ENCODE measurements at regions of chr16 and their contacts with region 1.

Region 1: DNA sequence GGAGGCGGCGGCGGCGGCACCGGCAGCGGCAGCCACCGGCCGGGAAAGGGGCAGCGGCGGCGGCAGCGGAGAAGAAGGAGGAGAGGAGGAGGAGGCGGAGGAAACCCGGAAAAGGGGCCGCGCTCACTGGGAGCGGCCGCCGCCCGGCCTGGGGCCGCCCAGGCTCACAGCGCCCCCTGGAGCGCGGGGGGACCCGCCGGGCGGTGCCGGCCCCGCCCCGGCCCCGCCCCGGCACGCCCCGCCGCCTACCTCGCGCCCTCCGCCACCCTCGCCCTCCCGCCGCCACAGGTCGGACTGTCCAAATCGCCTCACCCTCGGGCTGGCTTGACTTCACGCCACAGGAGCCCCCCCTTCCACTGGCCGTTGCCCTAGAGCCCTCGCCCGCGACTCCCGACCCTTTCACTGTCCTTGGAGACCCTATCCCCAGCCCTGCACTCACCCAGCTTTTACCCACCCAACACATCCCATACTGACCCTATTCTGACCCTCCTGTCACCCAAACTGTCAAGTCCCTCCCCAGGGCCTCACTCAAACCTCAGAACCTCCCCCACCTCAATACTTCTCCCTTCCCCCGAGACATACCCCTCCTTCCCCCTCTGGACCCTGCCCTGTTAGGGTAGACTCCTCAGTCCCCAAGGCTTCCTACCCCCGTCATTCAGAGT is at the start of gene CSNK2A2:
- DNase-seq: peak; percentile 42 to 87 (median 69)
- ATAC-seq: peak; percentile 94
- H3K4me3 ChIP-seq: peak within 1 kb of the TSS; percentile 56 to 67
- H3K4me3 Mint-ChIP-seq: peak within 1 kb of the TSS; percentile 89
- H3K27ac ChIP-seq: no peak within 1 kb of the TSS
- H3K27ac Mint-ChIP-seq: peak within 1 kb of the TSS; percentile 88
- H3K4me1 ChIP-seq: peaks cover 26% of the 10 kb centered on the region
- H3K4me1 Mint-ChIP-seq: peaks cover 39% of the 10 kb centered on the region
- H3K27me3 ChIP-seq: no peaks in the 10 kb centered on the region
- H3K27me3 Mint-ChIP-seq: peaks cover 7% of the 10 kb centered on the region
- CTCF ChIP-seq: no peak
- total RNA-seq, gene CSNK2A2: 53.3 to 58.4 TPM

Region 2: DNA sequence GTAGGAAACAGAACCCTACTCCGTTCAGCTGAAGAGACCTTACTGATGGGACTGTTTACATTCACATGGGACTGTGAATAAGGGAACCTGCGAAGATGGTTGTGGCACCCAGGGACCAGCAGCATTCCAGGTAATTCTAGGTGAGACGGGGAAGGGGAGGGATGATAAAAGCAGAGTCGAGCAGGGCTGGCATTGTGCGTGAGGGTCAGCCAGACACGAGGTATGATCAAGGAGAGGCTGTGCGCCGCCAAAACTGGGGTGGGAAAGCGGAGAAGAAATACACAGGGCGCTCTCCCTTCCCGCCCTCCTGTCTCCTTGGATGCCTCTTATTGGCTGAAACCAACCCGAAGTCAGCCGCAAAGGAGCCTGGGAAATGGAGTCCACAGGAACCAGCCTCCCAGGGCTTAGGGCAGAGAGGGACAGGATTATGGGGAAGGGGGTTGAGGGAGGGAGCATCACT is 38.1 kb after region 1 on chr16:
- CTCF ChIA-PET with region 1: no interaction called
- POLR2A ChIA-PET with region 1: no interaction called
- intact Hi-C with region 1: loop called in 1 of 2 experiments (anchors 5 kb)
- DNase-seq: peak; percentile 10 to 76 (median 64)
- ATAC-seq: peak; percentile 94
- H3K4me3 ChIP-seq: peak overlapping the region; percentile 47 to 56
- H3K4me3 Mint-ChIP-seq: peak overlapping the region; percentile 80
- H3K27ac ChIP-seq: no peak overlapping the region
- H3K27ac Mint-ChIP-seq: no peak overlapping the region
- H3K4me1 ChIP-seq: no peaks in the 10 kb centered on the region
- H3K4me1 Mint-ChIP-seq: peaks cover 9% of the 10 kb centered on the region
- H3K27me3 ChIP-seq: peaks cover 0 to 5% of the 10 kb centered on the region in 2 experiments
- H3K27me3 Mint-ChIP-seq: peaks cover 14% of the 10 kb centered on the region
- CTCF ChIP-seq: no peak

Region 3: GRCh38 chr16:58249780-58250478 is 51.8 kb after region 1 on chr16:
- CTCF ChIA-PET with region 1: no interaction called
- POLR2A ChIA-PET with region 1: no interaction called
- intact Hi-C with region 1: loop called (anchors 2 kb)
- DNase-seq: peak; percentile 70 to 91 (median 81)
- ATAC-seq: peak; percentile 98
- H3K4me3 ChIP-seq: peak overlapping the region; percentile 64 to 75
- H3K4me3 Mint-ChIP-seq: peak overlapping the region; percentile 83
- H3K27ac ChIP-seq: peak overlapping the region in 1 of 2 experiments; percentile 21
- H3K27ac Mint-ChIP-seq: no peak overlapping the region
- H3K4me1 ChIP-seq: peaks cover 10% of the 10 kb centered on the region
- H3K4me1 Mint-ChIP-seq: peaks cover 9% of the 10 kb centered on the region
- H3K27me3 ChIP-seq: peaks cover 0 to 6% of the 10 kb centered on the region in 2 experiments
- H3K27me3 Mint-ChIP-seq: peaks cover 2% of the 10 kb centered on the region
- CTCF ChIP-seq: no peak

Region 4: DNA sequence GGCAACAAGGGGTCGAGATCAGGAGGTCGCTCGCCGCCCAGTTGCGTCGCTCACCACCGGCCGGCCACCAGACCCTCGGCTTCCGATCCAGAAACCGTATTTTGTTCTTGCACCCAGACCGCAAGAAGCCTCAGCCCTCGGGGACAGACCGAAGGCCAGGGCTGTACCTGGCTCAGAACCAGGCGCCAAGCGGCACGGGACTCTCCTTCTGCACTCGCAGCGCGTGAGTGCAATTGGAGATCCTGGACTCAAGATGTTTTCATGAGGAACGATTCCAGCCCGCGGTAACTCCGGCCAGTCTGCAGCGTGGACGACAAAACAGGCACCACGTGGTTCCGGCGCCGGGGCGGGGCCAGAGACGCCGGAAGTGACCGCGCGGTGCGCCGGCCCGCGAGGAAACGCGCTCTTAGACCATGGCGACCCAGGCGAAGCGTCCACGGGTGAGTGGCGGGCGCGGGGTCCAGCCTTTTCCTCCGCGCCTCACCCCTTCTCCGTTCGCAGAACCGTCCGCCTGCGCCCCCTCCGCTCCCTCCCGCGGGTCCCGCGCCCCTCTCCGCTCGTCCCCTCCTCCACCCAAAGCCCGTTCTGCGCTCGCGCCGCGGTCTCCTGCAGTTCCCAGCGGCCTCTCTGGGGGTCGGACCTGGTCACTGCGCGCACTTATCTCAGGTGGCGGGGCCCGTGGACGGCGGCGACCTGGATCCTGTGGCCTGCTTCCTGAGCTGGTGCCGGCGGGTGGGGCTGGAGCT is 317.1 kb after region 1 on chr16 and contains the start of gene SETD6:
- CTCF ChIA-PET with region 1: no interaction called
- POLR2A ChIA-PET with region 1: no interaction called
- intact Hi-C with region 1: loop called in 1 of 2 experiments (anchors 10 kb)
- DNase-seq: peak; percentile 25 to 81 (median 68)
- ATAC-seq: peak; percentile 59
- H3K4me3 ChIP-seq: peak within 1 kb of the TSS; percentile 72 to 92
- H3K4me3 Mint-ChIP-seq: peak within 1 kb of the TSS; percentile 90
- H3K27ac ChIP-seq: peak within 1 kb of the TSS; percentile 64 to 73
- H3K27ac Mint-ChIP-seq: peak within 1 kb of the TSS; percentile 80
- H3K4me1 ChIP-seq: peaks cover 13% of the 10 kb centered on the region
- H3K4me1 Mint-ChIP-seq: peaks cover 20% of the 10 kb centered on the region
- H3K27me3 ChIP-seq: no peaks in the 10 kb centered on the region
- H3K27me3 Mint-ChIP-seq: no peaks in the 10 kb centered on the region
- CTCF ChIP-seq: no peak
- total RNA-seq, gene SETD6: 17.3 to 17.4 TPM